Panc1 (cell line): ENCODE measurements at regions of chr6 and their contacts with region 1.

Region 1: DNA sequence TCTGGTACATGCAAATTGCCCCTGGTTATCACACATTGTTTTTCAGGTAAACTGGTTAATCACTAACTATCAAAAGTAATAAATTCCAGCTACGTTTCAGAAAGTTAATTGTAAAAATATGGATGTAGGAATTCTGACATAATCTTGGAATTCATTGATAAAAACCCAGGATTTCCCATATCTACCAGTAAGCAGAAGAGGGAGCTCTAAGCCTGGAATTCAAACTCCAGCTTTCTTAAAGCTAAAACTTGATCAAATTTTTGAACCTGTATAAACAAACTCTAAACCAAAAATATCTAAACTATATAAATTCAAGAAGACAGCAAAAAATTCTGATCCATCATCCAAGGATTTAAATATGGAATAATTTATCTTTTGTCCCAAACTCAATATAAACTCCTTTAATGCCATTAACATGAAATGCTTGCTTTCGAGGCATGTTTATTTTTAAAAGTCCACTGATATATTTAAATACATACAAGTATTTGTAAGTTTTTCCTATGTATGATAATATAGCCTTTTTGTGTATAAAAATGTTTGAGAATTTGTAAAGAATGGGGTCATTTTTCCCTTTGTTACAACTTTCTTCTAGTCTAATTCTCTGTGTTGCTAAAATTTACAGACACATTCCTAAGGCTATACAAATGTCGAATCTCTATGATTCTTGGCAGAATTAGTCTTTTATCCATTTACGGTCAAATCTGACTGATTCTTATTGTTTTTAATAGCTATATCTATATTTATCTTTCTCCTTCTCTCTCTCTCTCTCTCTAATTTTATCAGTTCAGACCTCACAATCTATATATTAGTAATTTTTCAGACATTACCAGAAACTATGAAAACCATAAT is 91.4 kb upstream of the RNF217 start:
- DNase-seq: peak; percentile 17
- ATAC-seq: no peak
- H3K4me3 ChIP-seq: no peak overlapping the region
- H3K27ac ChIP-seq: no peak overlapping the region
- H3K4me1 ChIP-seq: no peaks in the 10 kb centered on the region
- H3K27me3 ChIP-seq: no peaks in the 10 kb centered on the region
- CTCF ChIP-seq: peak; percentile 80; the same call in 1 of the 2 replicates

Region 2: GRCh38 chr6:124903791-124904190 is 33.0 kb after region 1 on chr6:
- CTCF ChIA-PET with region 1: no interaction called
- POLR2A ChIA-PET with region 1: no interaction called
- in situ Hi-C with region 1: no loop called
- intact Hi-C with region 1: no loop called
- DNase-seq: no peak
- ATAC-seq: no peak
- H3K4me3 ChIP-seq: no peak overlapping the region
- H3K27ac ChIP-seq: no peak overlapping the region
- H3K4me1 ChIP-seq: no peaks in the 10 kb centered on the region
- H3K27me3 ChIP-seq: no peaks in the 10 kb centered on the region
- CTCF ChIP-seq: no peak

Region 3: DNA sequence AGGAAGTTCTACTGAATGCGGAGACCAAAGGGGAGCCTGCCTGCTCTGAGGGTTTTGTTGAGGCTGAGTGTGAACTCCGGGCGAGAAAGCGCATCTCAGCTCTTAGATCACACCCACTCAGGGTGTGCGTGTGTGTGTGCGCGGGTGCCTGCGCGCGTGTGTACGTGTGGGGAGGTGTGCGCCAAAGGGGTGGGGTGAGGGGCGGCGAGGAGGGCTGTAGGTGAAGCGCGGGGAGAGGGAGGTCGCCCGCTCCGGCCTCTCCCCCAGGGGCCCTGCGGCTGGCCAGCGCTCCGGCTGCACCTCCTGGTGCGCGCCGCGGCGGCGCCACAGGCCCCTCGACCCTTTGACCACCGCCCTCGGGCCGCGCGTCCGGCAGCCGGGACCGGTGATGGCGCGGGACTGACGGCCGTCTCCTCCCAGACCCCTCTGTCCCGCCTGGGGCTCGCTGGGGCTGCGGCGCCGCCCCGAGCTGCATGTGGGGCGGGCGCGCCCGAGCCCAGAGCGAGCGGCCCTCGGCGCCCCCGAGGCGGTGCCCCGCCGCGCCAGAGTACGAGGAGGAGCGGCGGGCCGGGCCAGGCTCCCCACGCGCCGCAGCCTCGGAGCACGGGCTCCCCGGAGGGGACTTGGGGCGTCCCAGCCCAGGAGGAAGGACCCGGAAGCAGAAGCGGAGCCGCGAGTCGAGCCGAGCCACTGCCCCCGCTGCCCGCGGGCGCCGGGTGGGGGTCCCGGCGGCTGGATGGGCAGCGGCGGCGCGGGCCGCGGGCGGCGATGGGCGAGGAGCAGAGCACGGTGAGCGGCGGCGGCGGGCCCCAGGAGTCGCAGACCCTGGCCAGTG is 91.2 kb after region 1 on chr6 and contains the start of gene RNF217:
- CTCF ChIA-PET with region 1: no interaction called
- POLR2A ChIA-PET with region 1: no interaction called
- in situ Hi-C with region 1: no loop called
- intact Hi-C with region 1: loop called (anchors 5 kb)
- DNase-seq: no peak
- ATAC-seq: peak; percentile 83
- H3K4me3 ChIP-seq: peak within 1 kb of the TSS; percentile 69
- H3K27ac ChIP-seq: peak within 1 kb of the TSS; percentile 89
- H3K4me1 ChIP-seq: peaks cover 33% of the 10 kb centered on the region
- H3K27me3 ChIP-seq: no peaks in the 10 kb centered on the region
- CTCF ChIP-seq: no peak
- total RNA-seq, gene RNF217: 37.7 TPM

Region 4: GRCh38 chr6:125114248-125114858 is 243.5 kb after region 1 on chr6:
- CTCF ChIA-PET with region 1: interaction called, 13 read pairs
- POLR2A ChIA-PET with region 1: no interaction called
- in situ Hi-C with region 1: no loop called
- intact Hi-C with region 1: loop called (anchors 1 kb)
- DNase-seq: no peak
- ATAC-seq: no peak
- H3K4me3 ChIP-seq: no peak overlapping the region
- H3K27ac ChIP-seq: no peak overlapping the region
- H3K4me1 ChIP-seq: no peaks in the 10 kb centered on the region; the same call in 1 of the 2 replicates
- H3K27me3 ChIP-seq: no peaks in the 10 kb centered on the region
- CTCF ChIP-seq: peak; percentile 72; the same call in 1 of the 2 replicates

Region 5: DNA sequence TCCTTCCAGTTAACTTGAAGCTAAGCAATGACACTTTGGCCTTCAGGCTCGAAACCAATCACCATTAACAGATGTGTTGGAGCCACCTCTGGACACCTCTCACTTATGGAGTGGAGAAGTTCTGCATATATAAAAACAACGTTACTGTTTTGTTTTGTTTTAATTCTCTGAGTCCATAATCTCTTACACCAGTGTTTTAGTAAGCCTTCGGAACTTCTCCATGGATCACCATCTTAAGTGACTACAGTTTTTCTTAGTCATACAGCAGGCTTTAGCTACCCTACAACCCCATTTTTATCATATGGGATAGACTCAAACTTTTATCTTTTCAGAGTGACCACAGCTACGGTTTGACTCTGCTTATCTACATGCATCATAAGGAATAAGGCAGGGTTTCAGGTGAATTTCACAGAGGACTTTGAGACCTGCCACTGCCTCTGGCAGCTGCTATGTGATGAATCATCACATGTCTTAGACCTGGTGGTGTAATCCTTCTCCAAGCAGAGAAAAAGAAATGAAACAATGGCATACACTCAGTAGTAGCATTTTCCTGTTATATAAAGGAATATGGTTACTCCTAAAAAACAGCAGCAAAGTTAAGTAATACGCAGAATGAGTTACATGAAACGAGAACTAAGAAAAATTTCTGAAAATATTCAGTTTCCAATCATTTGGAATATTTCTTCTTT is 436.5 kb after region 1 on chr6:
- CTCF ChIA-PET with region 1: no interaction called
- POLR2A ChIA-PET with region 1: no interaction called
- in situ Hi-C with region 1: no loop called
- intact Hi-C with region 1: loop called (anchors 5 kb)
- DNase-seq: no peak
- ATAC-seq: no peak
- H3K4me3 ChIP-seq: no peak overlapping the region
- H3K27ac ChIP-seq: no peak overlapping the region
- H3K4me1 ChIP-seq: no peaks in the 10 kb centered on the region
- H3K27me3 ChIP-seq: peaks cover 30% of the 10 kb centered on the region; the same call in 1 of the 2 replicates
- CTCF ChIP-seq: no peak

Region 6: GRCh38 chr6:125765944-125766343 is 895.1 kb after region 1 on chr6:
- CTCF ChIA-PET with region 1: no interaction called
- POLR2A ChIA-PET with region 1: no interaction called
- in situ Hi-C with region 1: no loop called
- intact Hi-C with region 1: loop called (anchors 5 kb)
- DNase-seq: no peak
- ATAC-seq: no peak
- H3K4me3 ChIP-seq: no peak overlapping the region
- H3K27ac ChIP-seq: no peak overlapping the region
- H3K4me1 ChIP-seq: no peaks in the 10 kb centered on the region
- H3K27me3 ChIP-seq: peaks cover 20% of the 10 kb centered on the region; the same call in 1 of the 2 replicates
- CTCF ChIP-seq: no peak